ENCODE measurements at regions of chr1 and their contacts with region 1.

Region 1: DNA sequence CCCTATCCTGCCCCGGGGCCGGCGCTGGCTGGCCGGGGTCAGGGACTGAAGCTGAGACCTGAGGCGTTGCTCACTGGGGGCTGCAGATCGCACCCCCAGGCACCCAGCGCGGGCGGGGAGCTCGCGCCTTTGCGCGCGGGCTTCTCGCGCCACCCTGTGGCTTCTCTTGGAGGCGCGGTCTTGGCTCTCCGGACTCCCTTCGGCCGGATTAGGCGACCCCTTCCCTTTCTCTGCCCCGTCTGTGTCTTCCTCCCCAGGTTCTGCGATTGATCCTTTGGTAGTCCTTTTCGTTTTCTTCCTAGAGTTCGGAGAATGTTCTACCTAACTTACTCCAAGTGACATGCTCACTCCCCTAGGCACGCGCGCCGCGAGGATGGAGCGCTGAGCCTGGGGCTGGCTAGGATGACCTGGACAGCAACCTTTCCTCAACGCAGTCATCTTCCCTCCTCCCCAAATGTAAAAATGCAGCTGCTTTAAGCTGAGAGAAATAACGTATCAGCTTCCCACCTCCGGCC is 495 bp upstream of the NTRK1 start:
- DNase-seq: peak; percentile 63
- H3K4me3 Mint-ChIP-seq: peak overlapping the region; percentile 58
- H3K27ac Mint-ChIP-seq: no peak overlapping the region
- H3K4me1 Mint-ChIP-seq: peaks cover 28% of the 10 kb centered on the region
- H3K27me3 Mint-ChIP-seq: peaks cover 96% of the 10 kb centered on the region
- CTCF ChIP-seq: peak; percentile 94

Region 2: DNA sequence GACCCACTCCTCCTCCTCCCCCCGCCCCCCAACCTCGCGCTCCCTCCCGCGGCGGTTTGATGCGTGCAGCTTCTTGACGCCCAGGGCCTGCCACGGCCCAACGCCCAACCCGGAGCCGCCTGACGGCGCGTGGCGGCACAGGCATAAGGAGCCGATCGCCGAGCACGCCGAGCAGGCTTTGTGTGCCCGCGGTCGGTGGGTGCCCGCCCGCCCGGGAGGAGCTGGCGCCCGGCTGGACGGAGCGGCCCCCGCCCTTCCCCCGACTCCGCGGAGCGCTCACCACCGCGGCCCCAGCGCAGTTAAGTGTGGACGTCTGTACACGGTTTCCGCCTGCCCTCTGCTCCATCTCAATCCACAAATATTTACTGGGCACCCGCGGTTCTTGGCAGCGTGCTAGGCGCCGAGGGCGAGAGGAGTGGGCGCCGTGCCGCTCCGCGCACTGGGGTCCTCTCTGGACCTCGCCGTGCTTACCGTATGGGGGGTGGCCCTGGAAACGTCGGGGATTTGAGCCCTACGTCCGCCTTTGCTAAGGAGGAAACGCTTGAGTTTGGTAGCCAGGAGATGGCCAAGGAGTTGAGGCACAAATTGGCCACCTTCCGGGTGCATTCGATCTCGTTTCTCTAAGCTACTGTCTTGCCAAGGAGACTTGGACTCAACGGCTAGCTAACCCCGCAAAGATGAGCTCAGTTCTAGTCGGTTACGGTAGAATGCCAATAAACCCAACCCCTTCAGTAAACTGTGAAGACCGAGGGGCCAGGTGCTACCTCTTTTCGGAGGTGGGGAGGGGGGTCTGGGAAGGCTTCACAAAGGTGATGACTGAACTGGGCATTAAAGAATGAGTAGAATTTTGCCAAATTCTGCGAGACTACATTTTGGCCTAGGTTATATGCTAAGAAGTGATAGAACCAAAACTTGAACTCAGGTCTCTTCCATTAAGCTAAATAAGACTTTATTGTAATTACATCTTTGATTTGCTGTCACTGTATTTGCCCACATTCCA is 108.1 kb before region 1 on chr1:
- CTCF ChIA-PET with region 1: no interaction called
- intact Hi-C with region 1: no loop called
- DNase-seq: peak; percentile 98
- H3K4me3 Mint-ChIP-seq: peak overlapping the region; percentile 67
- H3K27ac Mint-ChIP-seq: peak overlapping the region; percentile 93
- H3K4me1 Mint-ChIP-seq: peaks cover 29% of the 10 kb centered on the region
- H3K27me3 Mint-ChIP-seq: no peaks in the 10 kb centered on the region
- CTCF ChIP-seq: no peak

Region 3: DNA sequence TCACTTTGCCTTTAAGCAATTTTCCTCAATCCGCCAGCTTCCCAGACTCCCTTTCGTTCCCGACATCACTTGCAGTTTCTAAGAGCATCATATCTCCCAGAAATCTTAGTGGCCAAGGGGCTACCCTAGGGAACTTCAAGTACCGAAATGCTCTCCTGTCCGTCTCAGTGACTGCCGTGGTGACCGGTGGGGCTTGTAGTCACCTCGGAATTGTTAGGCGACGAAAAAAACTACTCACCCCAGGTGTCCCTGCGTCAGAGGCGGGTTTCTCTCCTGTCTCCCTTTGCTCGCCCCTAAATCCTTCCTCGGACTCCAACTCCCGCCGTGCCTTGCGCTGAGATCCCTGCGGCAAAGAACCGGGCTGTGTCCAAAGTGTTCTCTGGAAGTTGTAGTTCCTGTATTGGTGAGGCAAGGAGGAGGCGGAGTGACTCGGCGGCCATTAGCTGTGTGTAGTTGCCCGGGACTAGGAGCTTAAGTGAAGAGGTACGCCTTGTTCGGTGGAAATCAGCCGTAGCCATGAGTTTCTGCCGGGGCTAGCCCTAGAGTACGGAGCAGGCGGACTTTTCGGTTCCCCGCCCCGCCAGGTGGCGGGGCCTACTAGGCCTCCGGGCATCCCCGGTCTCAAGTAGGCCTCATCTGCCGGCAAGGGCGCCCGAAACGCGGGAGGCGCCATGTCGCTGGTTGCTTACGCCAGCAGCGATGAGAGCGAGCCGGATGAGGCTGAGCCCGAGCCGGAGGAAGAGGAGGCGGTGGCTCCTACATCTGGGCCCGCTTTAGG is 92.9 kb before region 1 on chr1 and contains the start of gene PRCC:
- CTCF ChIA-PET with region 1: no interaction called
- intact Hi-C with region 1: no loop called
- DNase-seq: peak; percentile 98
- H3K4me3 Mint-ChIP-seq: no peak within 1 kb of the TSS
- H3K27ac Mint-ChIP-seq: no peak within 1 kb of the TSS
- H3K4me1 Mint-ChIP-seq: peaks cover 37% of the 10 kb centered on the region
- H3K27me3 Mint-ChIP-seq: no peaks in the 10 kb centered on the region
- CTCF ChIP-seq: no peak
- total RNA-seq, gene PRCC: 72.8 and 80.4 TPM in 2 replicates

Region 4: DNA sequence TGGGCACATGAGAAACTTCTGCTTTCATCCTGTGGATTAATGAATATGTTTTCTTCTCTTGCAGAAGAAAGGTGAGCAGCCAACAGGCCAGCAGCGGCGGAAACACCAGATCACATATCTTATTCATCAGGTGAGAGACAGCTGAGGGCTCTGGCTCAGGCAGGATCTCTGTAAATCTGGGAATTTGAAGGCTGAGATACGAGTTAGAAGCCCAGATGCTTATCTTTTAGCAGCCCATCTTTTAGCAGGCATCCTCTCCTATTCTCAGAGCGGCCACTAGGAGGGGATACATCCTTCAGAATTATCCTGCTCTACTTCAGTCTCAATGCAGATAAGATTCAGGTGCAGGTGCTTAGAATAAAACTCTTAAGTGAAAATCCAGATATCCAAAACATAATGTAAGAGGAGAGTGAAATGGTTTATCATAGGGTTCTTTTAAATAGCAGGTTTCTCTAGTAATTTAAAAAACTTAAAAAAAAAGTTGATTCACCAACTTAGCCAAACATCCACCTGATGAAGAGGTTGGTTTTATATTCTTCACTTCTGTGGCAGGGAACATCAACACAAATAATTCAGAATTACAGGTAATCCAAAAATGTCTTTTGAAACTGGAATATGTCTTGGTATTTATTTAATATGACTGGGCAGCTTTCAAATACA is 62.8 kb before region 1 on chr1:
- CTCF ChIA-PET with region 1: interaction called, 3 read pairs
- intact Hi-C with region 1: loop called (anchors 1 kb)
- DNase-seq: peak; percentile 69
- H3K4me3 Mint-ChIP-seq: no peak overlapping the region
- H3K27ac Mint-ChIP-seq: no peak overlapping the region
- H3K4me1 Mint-ChIP-seq: no peaks in the 10 kb centered on the region
- H3K27me3 Mint-ChIP-seq: no peaks in the 10 kb centered on the region
- CTCF ChIP-seq: peak; percentile 81

Region 5: GRCh38 chr1:156813750-156814570 is 46.2 kb before region 1 on chr1:
- CTCF ChIA-PET with region 1: interaction called, 13 read pairs
- intact Hi-C with region 1: no loop called
- DNase-seq: peak; percentile 60
- H3K4me3 Mint-ChIP-seq: peak overlapping the region; percentile 62
- H3K27ac Mint-ChIP-seq: peak overlapping the region; percentile 3
- H3K4me1 Mint-ChIP-seq: peaks cover 16% of the 10 kb centered on the region
- H3K27me3 Mint-ChIP-seq: peaks cover 34% of the 10 kb centered on the region
- CTCF ChIP-seq: peak; percentile 35

Region 6: DNA sequence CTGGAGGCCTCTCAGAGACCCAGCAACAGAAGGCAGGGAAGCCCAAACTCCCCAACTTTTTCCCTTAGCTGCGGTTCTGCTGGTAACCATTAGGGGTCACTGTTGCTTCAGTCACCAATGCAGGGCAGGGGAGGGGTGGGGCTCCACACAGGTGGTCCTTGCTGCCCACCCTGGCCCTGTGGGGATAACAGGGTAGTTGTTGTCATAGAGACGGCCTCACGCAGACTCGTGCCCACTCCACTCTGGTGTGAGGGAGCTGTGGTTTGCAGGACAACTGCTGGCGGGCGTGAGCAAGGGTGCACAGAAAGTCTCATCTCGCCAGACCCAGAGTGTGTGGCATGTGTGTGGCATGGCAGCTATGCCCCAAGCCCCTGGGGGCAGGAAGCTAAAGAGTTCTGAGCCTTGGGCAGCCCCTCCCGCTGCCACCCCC is 21.2 kb before region 1 on chr1:
- CTCF ChIA-PET with region 1: interaction called, 35 read pairs
- intact Hi-C with region 1: no loop called
- DNase-seq: peak; percentile 47
- H3K4me3 Mint-ChIP-seq: no peak overlapping the region
- H3K27ac Mint-ChIP-seq: no peak overlapping the region
- H3K4me1 Mint-ChIP-seq: no peaks in the 10 kb centered on the region
- H3K27me3 Mint-ChIP-seq: peaks cover 100% of the 10 kb centered on the region
- CTCF ChIP-seq: peak; percentile 93